Right cardiac atrium (tissue), 5 donors: ENCODE measurements at regions of chr13 and their contacts with region 1.

Region 1: GRCh38 chr13:45047394-45048310 is 58.3 kb downstream of the GPALPP1 start:
- DNase-seq: peak; percentile 68 to 75 (median 73)
- ATAC-seq: peak; percentile 83 to 89
- H3K4me3 ChIP-seq: peak overlapping the region; percentile 54
- H3K27ac ChIP-seq: no peak overlapping the region
- H3K4me1 ChIP-seq: peaks cover 2% of the 10 kb centered on the region
- H3K27me3 ChIP-seq: no peaks in the 10 kb centered on the region

Region 2: DNA sequence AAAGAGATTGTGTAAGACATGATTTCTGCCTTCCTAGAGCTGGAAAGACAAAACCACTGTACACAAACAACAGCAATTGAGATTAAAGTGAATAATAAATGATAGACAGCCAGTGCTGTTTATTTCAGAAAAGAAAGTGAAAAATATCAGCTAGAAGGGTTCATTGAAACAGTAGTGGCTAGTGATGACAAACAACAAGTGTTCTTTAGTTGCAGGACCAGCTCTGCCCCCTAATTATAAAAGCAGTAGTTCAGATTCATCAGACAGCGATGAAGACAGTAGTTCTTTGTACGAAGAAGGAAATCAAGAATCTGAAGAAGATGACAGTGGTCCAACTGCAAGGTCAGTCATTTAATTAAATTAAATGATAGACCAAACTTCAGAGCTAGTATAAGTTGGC is 43.6 kb before region 1 on chr13:
- intact Hi-C with region 1: no loop called
- DNase-seq: no peak
- ATAC-seq: no peak
- H3K4me3 ChIP-seq: no peak overlapping the region
- H3K27ac ChIP-seq: no peak overlapping the region
- H3K4me1 ChIP-seq: no peaks in the 10 kb centered on the region
- H3K27me3 ChIP-seq: no peaks in the 10 kb centered on the region

Region 3: GRCh38 chr13:45231722-45232121 is 184.1 kb after region 1 on chr13:
- intact Hi-C with region 1: no loop called
- DNase-seq: no peak
- ATAC-seq: no peak
- H3K4me3 ChIP-seq: no peak overlapping the region
- H3K27ac ChIP-seq: no peak overlapping the region
- H3K4me1 ChIP-seq: no peaks in the 10 kb centered on the region
- H3K27me3 ChIP-seq: no peaks in the 10 kb centered on the region

Region 4: DNA sequence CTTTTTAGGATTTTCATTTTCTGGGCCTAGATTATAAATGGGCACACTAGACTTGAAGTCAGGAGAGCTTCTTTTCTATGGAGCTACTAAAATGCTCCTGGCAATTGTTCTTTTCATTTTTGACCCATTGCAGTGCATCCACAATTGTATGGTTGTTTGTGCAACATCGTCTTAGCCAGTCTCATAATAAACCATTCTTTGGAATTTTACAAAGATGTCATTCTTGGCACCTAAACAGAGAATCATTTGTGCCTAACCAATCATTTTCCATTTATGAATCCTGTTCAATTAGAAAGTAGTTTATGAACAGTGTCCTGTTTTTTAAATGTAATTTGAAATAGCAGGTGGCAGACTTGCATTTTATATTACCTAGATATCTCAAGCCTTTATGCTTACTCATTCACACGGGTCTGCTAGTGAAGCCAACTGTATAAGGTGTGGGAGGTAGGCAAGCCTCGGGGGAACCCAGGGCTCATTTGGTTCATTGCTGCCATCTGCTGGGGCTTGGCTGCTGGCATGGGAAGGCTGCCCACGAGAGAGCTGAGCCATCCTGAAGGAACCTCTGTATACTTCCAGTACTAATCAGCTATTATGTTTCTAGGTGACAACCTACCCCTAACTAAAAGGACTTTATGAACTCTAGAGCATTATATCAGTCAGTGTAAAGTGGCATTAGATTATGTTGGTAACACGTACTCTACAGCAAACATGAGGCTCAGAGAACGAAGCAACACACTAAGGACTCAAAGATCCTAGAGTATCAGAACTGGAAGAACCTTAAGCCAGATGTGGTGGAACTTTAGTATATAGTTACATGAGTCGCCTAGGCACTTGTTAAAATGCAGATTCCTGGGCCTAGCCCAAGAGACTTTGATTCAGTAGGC is 233.3 kb after region 1 on chr13:
- intact Hi-C with region 1: loop called (anchors 2 to 5 kb)
- DNase-seq: peak; percentile 40 to 83 (median 77)
- ATAC-seq: peak; percentile 88 to 94
- H3K4me3 ChIP-seq: no peak overlapping the region
- H3K27ac ChIP-seq: no peak overlapping the region
- H3K4me1 ChIP-seq: no peaks in the 10 kb centered on the region
- H3K27me3 ChIP-seq: no peaks in the 10 kb centered on the region

Region 5: GRCh38 chr13:45306966-45307365 is 259.3 kb after region 1 on chr13:
- intact Hi-C with region 1: loop called in 3 of 4 experiments (anchors 5 to 10 kb)
- DNase-seq: no peak
- ATAC-seq: no peak
- H3K4me3 ChIP-seq: no peak overlapping the region
- H3K27ac ChIP-seq: no peak overlapping the region
- H3K4me1 ChIP-seq: no peaks in the 10 kb centered on the region
- H3K27me3 ChIP-seq: no peaks in the 10 kb centered on the region